Activated CD4-positive, alpha-beta T cell treated with anti-CD3 and anti-CD28 coated beads, Interleukin-2, amount 10 ng/mL, durations not matched to agents 7 days and 5 days (primary cell): ENCODE measurements at regions of chr22 and their contacts with region 1.

Region 1: GRCh38 chr22:30754971-30755756 is 60.5 kb downstream of the OSBP2 start:
- DNase-seq: peak; percentile 69
- H3K4me3 Mint-ChIP-seq: no peak overlapping the region
- H3K27ac Mint-ChIP-seq: peak overlapping the region; percentile 16
- H3K4me1 Mint-ChIP-seq: peaks cover 10% of the 10 kb centered on the region
- H3K27me3 Mint-ChIP-seq: no peaks in the 10 kb centered on the region

Region 2: DNA sequence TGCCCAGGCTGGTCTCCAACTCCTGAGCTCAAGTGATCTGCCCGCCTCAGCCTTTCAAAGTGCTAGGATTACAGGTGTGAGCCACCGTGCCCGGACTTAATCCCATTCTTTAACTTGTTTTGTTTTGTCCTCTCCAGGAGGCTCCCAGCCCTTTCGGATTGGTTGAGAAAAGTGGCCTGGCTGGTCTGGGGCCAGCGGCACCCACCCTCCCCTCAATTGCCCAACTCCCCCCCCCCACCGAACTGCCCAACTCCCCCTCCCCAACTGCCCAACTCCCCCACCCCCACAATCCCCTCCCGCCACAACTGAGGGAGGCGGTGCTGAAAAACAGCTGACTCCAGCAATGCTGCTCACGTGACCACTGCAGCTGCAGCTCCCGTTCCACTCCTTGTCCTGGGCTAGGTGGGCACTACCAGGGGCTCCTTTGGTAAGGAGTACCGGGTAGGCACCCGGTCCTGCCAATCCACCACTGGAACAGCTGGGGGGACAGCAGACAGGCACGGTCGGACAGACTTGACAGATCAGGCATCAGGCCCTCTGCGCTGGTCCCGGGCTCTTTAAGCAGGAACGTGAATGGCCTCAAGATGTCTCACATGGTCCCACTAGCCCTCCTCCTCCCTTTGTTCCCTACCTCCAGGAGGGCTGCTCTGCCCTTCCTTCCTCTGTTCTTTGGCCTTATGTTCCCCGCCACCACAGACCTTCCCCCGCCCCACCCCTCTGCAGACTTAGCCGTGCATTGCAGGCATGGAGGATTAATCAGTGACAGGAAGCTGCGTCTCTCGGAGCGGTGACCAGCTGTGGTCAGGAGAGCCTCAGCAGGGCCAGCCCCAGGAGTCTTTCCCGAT is 148.5 kb before region 1 on chr22 and contains the start of gene TCN2:
- CTCF ChIA-PET with region 1: interaction called, 11 read pairs
- POLR2A ChIA-PET with region 1: no interaction called
- DNase-seq: peak; percentile 36
- H3K4me3 Mint-ChIP-seq: peak within 1 kb of the TSS; percentile 51
- H3K27ac Mint-ChIP-seq: peak within 1 kb of the TSS; percentile 84
- H3K4me1 Mint-ChIP-seq: peaks cover 45% of the 10 kb centered on the region
- H3K27me3 Mint-ChIP-seq: peaks cover 1% of the 10 kb centered on the region
- total RNA-seq, gene TCN2: 0.32 to 0.54 TPM

Region 3: GRCh38 chr22:30649430-30650007 is 105.6 kb before region 1 on chr22:
- CTCF ChIA-PET with region 1: interaction called, 10 read pairs
- POLR2A ChIA-PET with region 1: no interaction called
- DNase-seq: peak; percentile 69
- H3K4me3 Mint-ChIP-seq: no peak overlapping the region
- H3K27ac Mint-ChIP-seq: peak overlapping the region; percentile 83
- H3K4me1 Mint-ChIP-seq: peaks cover 33% of the 10 kb centered on the region
- H3K27me3 Mint-ChIP-seq: no peaks in the 10 kb centered on the region

Region 4: DNA sequence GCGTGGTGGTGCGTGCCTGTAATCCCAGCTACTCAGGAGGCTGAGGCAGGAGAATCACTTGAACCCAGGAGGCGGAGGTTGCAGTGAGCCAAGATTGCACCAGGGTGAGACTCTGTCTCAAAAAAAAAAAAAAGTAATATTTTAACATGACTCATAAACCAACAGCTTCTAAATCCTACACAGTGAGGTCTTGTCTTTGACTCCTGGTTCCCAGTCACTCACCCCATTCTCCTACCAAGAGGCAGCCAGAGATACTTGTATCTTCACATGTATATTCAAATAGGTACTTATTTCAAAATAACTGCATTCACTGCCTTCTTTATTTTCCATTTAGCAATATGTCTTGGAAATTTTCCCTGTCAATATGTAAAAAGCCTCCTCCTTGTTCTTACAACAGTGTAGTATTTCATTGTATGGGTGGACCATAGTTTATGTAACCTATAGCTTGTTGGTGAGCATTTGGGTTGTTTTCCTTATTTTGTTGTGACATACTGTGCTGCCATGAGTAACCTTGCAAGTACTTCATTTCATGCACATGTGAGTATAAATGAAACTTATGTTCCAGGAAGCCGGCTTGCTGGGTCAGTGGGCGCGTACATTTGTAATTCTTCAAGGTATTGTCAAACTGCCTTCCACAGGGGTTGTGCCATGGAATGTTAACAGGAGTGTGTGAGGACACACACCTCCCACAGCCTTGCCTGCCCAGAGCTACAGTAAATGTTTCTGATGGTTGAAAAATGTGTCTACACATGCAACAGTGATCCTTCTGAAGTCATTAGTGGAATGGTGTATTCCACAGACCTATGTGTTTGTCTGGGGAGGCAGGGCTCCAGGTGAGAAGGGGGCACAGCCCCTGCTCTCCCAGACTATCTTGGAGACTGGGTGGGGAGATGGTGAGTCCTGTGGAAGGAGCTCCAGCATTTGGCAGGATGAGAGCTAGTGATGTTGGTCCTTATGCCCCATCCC is 12.6 kb before region 1 on chr22:
- CTCF ChIA-PET with region 1: interaction called, 38 read pairs
- POLR2A ChIA-PET with region 1: interaction called, 3 read pairs
- DNase-seq: no peak
- H3K4me3 Mint-ChIP-seq: no peak overlapping the region
- H3K27ac Mint-ChIP-seq: peak overlapping the region; percentile 74
- H3K4me1 Mint-ChIP-seq: peaks cover 65% of the 10 kb centered on the region
- H3K27me3 Mint-ChIP-seq: no peaks in the 10 kb centered on the region